ENCODE measurements at regions of chr3 and their contacts with region 1.

Region 1: DNA sequence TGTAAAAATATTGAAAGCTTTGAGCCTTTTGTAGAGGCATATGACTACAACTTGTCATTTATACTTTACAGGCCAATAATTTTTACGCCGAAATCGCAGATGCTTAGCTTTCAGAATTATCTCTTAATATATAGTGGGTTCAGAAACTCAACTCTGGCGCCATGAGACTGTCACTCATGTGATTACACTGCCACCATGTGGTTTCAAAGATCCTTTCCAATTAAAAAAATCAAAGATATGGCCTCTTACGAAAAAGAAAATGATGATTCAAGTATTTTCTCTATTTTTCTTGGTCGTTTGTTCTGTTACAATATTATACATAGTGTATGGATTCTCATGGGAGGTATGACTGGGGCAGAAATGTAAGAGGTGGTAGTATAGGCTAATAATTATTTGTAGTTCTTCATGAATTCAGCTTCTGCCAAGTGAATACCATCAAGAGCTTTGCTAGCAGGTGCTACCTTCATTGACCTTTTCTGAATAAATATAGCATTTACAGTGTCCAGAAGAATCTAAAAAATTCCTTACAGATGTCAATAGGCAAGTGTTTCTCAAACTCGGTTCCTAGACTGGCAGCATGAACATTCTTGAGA is 751.7 kb upstream of the GOLIM4 start:
- DNase-seq: peak in 1 of 2 donors; percentile 8
- ATAC-seq: peak in 1 of 8 donors; percentile 50
- H3K4me3 ChIP-seq: no peak overlapping the region
- H3K27ac ChIP-seq: no peak overlapping the region
- H3K4me1 ChIP-seq: peaks cover 0 to 7% (median 0%) of the 10 kb centered on the region in 9 donors
- H3K27me3 ChIP-seq: peaks cover 0 to 20% (median 5%) of the 10 kb centered on the region in 7 donors
- CTCF ChIP-seq: peak; percentile 47 to 81 (median 66)

Region 2: GRCh38 chr3:168047190-168047795 is 800.1 kb before region 1 on chr3:
- intact Hi-C with region 1: loop called in 2 of 10 experiments (anchors 5 kb)
- DNase-seq: no peak
- ATAC-seq: peak; percentile 52 to 67 (median 63)
- H3K4me3 ChIP-seq: no peak overlapping the region
- H3K27ac ChIP-seq: no peak overlapping the region
- H3K4me1 ChIP-seq: peaks cover 0 to 71% (median 47%) of the 10 kb centered on the region in 9 donors
- H3K27me3 ChIP-seq: no peaks in the 10 kb centered on the region
- CTCF ChIP-seq: peak; percentile 72 to 97 (median 83)

Region 3: GRCh38 chr3:168213920-168214319 is 633.5 kb before region 1 on chr3:
- intact Hi-C with region 1: loop called (anchors 2 to 10 kb)
- DNase-seq: no peak
- ATAC-seq: no peak
- H3K4me3 ChIP-seq: no peak overlapping the region
- H3K27ac ChIP-seq: no peak overlapping the region
- H3K4me1 ChIP-seq: peaks cover 0 to 13% (median 0%) of the 10 kb centered on the region in 9 donors
- H3K27me3 ChIP-seq: no peaks in the 10 kb centered on the region
- CTCF ChIP-seq: no peak

Region 4: DNA sequence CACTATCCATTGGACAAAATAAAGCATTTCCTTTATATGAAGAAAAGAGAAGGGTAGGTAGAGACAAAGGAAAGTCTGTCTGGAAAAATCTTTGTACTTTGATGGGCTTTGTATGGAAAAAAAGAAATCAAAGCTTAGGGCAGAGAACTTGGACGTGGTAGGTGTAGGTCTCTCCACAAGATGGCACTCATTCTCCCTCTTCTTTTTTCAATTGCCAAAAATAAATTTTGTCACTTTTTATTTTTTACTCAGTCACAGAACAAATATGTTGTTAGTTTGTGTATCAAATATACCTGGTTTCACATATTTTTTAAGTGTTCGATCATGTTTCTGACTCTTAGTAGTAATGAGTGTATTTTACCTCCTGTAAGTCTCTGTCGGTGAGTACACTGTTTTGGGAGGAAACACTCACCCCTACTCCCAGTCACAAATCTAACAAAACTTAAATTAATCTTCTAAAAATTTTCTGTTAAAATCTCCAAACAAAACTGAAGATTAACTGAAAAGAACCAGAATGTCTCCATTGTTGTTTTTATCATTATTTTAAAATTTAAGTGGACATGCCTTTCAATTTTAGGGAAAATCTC is 335.9 kb before region 1 on chr3:
- intact Hi-C with region 1: loop called (anchors 2 to 5 kb)
- DNase-seq: no peak
- ATAC-seq: no peak
- H3K4me3 ChIP-seq: no peak overlapping the region
- H3K27ac ChIP-seq: no peak overlapping the region
- H3K4me1 ChIP-seq: no peaks in the 10 kb centered on the region
- H3K27me3 ChIP-seq: peaks cover 0 to 33% (median 12%) of the 10 kb centered on the region in 7 donors
- CTCF ChIP-seq: peak in 8 of 9 donors; percentile 35 to 64 (median 54)

Region 5: GRCh38 chr3:168517249-168518071 is 329.9 kb before region 1 on chr3:
- intact Hi-C with region 1: loop called in 8 of 10 experiments (anchors 5 kb)
- DNase-seq: no peak
- ATAC-seq: no peak
- H3K4me3 ChIP-seq: no peak overlapping the region
- H3K27ac ChIP-seq: no peak overlapping the region
- H3K4me1 ChIP-seq: no peaks in the 10 kb centered on the region
- H3K27me3 ChIP-seq: peaks cover 0 to 2% (median 0%) of the 10 kb centered on the region in 7 donors
- CTCF ChIP-seq: no peak

Region 6: GRCh38 chr3:168620826-168621225 is 226.6 kb before region 1 on chr3:
- intact Hi-C with region 1: loop called in 1 of 10 experiments (anchors 10 kb)
- DNase-seq: no peak
- ATAC-seq: peak in 2 of 8 donors; percentile 57 to 79
- H3K4me3 ChIP-seq: no peak overlapping the region
- H3K27ac ChIP-seq: no peak overlapping the region
- H3K4me1 ChIP-seq: no peaks in the 10 kb centered on the region
- H3K27me3 ChIP-seq: peaks cover 0 to 8% (median 0%) of the 10 kb centered on the region in 7 donors
- CTCF ChIP-seq: peak in 6 of 9 donors; percentile 39 to 51 (median 45)

Measured in heart right ventricle (tissue), 16 donors.